ENCODE measurements at regions of chr17 and their contacts with region 1.

Region 1: GRCh38 chr17:28524476-28525368 is 18.6 kb downstream of the FOXN1 start:
- DNase-seq: no peak

Region 2: DNA sequence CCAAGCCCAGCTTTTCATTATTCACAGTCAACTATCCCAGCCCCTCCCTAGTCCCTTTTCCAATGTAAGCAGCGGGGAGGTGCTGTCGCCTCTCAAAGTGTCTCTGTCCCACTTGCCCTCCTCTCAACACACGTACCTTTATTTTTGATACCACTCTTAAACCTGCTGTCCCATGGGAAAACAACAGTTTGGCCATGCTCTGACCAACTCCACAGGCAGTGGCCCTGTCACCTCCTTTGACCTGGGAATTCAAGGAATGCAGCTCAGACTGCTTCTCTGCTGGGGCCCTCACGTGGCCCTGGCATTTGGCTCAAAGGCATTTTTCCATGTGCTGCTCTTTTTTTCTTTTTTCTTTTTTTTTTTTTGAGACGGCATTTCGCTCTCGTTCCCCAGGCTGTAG is 635.8 kb before region 1 on chr17:
- intact Hi-C with region 1: no loop called
- DNase-seq: no peak

Region 3: GRCh38 chr17:28554565-28554964 is 29.8 kb after region 1 on chr17:
- intact Hi-C with region 1: loop called (anchors 2 kb)
- DNase-seq: no peak

Measured in head of caudate nucleus (tissue), 42 donors.